Psoas muscle (tissue), 8 donors: ENCODE measurements at regions of chr10 and their contacts with region 1.

Region 1: DNA sequence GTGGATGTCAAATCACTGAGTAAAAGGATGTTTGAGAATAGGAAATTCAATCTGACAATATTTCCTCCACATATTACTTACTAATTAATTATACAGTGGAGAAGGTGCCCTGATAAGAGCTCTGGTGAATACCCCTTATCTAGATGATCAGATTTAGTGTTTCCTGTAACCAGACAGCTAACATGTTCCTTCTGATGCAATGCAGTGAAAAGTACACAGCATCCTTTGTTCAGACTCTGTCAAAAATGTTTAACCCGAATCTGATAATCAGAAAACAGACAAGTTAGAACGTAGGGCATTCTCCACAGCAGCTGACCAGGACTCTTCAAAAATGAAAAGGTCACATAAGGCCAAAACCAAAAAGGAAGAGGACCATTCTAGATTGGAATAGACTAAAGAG is 46.2 kb downstream of the WDR11 start:
- DNase-seq: no peak
- ATAC-seq: no peak
- H3K4me3 ChIP-seq: no peak overlapping the region
- H3K27ac ChIP-seq: no peak overlapping the region
- H3K4me1 ChIP-seq: no peaks in the 10 kb centered on the region
- H3K27me3 ChIP-seq: no peaks in the 10 kb centered on the region
- CTCF ChIP-seq: no peak

Region 2: DNA sequence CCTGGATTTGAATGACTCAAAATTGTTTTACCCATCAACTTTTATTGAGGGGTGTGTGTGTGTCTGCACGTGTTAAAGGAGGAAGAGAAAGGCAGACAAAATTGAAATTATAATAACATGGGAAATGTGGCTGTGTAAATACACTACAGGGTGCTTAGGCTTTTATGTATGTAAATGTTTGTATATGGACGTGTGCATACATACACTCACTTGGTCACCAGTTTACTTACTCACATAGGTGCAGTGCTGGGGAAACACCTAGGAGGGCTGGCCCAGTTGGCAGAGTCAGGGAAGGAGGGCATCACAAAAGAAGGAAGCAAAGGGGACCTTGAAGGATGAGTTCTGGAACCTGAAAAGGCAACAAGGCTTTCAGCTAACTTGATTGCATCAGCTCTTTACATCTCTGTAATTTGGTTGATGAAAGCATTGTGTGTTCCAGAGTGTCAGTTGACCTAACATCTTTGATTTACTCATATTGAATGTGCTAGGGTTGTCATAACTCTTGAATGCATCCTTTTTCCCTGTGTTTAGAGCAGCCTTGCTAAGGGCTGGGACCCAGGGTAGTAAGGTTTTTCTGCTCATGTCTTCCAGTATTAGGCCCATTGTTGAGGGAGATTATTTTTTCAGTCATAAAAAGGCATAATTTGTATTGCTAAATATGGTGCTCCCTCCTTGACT is 36.0 kb before region 1 on chr10:
- intact Hi-C with region 1: loop called in 1 of 2 experiments (anchors 5 kb)
- DNase-seq: no peak
- ATAC-seq: no peak
- H3K4me3 ChIP-seq: no peak overlapping the region
- H3K27ac ChIP-seq: no peak overlapping the region
- H3K4me1 ChIP-seq: no peaks in the 10 kb centered on the region
- H3K27me3 ChIP-seq: no peaks in the 10 kb centered on the region
- CTCF ChIP-seq: no peak